HEK293 (cell line): ENCODE measurements at regions of chr14 and their contacts with region 1.

Region 1: GRCh38 chr14:49585803-49586672 is at the start of gene RPS29:
- H3K4me3 ChIP-seq: peak within 1 kb of the TSS; percentile 92
- H3K27ac ChIP-seq: peak within 1 kb of the TSS; percentile 76
- H3K4me1 ChIP-seq: peaks cover 9% of the 10 kb centered on the region
- CTCF ChIP-seq: no peak

Region 2: DNA sequence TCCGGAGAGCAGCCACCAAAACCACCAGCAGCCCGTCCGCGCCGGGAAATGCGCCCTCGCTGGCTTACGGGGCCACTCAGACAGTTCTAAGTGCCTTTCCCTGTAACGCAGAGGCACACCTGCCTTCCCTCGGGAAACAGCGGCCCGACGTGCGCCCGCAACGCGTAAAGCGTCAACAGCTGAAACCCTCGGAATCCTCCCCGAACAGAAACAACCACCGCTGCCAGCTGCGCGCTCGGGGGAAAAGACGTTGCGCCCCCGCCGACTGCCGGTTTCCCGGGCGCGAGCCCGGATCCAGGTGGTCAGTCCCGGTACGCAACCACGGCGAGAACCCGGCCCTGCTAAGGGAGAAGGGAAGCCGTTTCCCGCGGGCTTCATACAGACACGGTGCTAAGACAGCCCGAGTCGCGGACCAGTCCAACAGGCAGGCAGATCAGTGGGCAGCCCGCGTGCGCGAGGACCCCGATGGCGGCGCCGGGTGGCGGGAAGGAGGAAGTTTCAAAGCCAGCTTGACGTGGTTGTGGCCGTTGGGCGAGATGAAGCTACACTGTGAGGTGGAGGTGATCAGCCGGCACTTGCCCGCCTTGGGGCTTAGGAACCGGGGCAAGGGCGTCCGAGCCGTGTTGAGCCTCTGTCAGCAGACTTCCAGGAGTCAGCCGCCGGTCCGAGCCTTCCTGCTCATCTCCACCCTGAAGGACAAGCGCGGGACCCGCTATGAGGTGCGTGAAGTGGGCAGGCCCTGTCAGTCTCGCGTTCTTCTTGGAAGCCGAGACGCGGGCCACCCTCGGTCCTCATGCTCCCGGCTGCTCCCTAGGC is 12.7 kb after region 1 on chr14 and contains the start of gene LRR1:
- CTCF ChIA-PET with region 1: interaction called, 7 read pairs
- POLR2A ChIA-PET with region 1: interaction called, 27 read pairs
- H3K4me3 ChIP-seq: peak within 1 kb of the TSS; percentile 87
- H3K27ac ChIP-seq: peak within 1 kb of the TSS; percentile 98
- H3K4me1 ChIP-seq: peaks cover 10% of the 10 kb centered on the region
- CTCF ChIP-seq: peak; percentile 5; the same call in 1 of the 2 replicates